T-cell (primary cell): ENCODE measurements at regions of chr9 and their contacts with region 1.

Region 1: DNA sequence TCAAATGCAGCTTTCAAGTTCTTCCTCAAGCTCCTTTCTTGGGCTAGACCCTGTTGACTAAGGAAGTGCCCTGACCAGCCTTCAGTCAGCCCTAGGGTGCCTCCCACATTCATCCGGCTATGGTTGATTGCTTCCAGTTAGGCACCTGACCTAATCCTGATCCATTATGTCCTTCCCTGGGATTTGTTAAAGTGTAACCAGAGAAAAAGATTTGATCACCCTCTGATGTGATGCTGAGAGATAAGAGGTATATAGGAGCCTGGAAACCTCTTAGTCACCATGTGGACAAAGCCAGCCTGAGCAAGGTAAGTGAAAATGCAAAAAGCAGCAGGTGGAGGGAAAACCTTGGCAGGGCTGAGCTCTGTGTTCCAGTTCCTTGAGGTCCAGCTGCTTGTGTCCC is 178.8 kb upstream of the ERCC6L2 start:
- DNase-seq: no peak
- ATAC-seq: no peak
- H3K4me3 ChIP-seq: no peak overlapping the region
- H3K4me3 Mint-ChIP-seq: no peak overlapping the region
- H3K27ac ChIP-seq: no peak overlapping the region
- H3K27ac Mint-ChIP-seq: no peak overlapping the region
- H3K4me1 ChIP-seq: no peaks in the 10 kb centered on the region
- H3K4me1 Mint-ChIP-seq: no peaks in the 10 kb centered on the region
- H3K27me3 ChIP-seq: peaks cover 0 to 5% of the 10 kb centered on the region in 2 experiments
- H3K27me3 Mint-ChIP-seq: peaks cover 2 to 5% of the 10 kb centered on the region in 2 donors

Region 2: DNA sequence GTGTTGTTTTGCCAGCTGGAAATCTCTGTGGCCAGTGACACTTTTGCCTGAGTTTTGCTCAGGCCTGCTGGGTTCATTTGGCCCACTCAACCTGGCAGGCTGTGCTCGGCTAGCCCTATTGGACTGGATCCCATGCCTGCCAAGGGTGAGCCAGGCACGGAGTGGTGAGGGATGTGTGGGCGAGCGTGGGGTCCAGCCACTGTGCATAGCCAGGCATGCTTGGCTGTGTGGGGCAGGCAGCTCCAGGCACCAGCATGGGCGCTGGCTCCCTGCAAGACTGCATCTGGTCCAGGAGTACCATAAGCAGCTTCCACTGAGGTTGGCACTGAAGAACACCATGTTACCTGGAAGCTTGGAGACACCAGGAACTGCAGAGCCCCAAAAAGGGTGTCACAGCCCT is 19.1 kb before region 1 on chr9:
- CTCF ChIA-PET with region 1: no interaction called
- POLR2A ChIA-PET with region 1: no interaction called
- DNase-seq: no peak
- ATAC-seq: no peak
- H3K4me3 ChIP-seq: no peak overlapping the region
- H3K4me3 Mint-ChIP-seq: no peak overlapping the region
- H3K27ac ChIP-seq: no peak overlapping the region
- H3K27ac Mint-ChIP-seq: no peak overlapping the region
- H3K4me1 ChIP-seq: peaks cover 2 to 9% of the 10 kb centered on the region in 2 experiments
- H3K4me1 Mint-ChIP-seq: peaks cover 12 to 19% (median 17%) of the 10 kb centered on the region in 3 donors
- H3K27me3 ChIP-seq: peaks cover 0 to 14% of the 10 kb centered on the region in 2 experiments
- H3K27me3 Mint-ChIP-seq: peaks cover 2 to 6% of the 10 kb centered on the region in 2 donors

Region 3: DNA sequence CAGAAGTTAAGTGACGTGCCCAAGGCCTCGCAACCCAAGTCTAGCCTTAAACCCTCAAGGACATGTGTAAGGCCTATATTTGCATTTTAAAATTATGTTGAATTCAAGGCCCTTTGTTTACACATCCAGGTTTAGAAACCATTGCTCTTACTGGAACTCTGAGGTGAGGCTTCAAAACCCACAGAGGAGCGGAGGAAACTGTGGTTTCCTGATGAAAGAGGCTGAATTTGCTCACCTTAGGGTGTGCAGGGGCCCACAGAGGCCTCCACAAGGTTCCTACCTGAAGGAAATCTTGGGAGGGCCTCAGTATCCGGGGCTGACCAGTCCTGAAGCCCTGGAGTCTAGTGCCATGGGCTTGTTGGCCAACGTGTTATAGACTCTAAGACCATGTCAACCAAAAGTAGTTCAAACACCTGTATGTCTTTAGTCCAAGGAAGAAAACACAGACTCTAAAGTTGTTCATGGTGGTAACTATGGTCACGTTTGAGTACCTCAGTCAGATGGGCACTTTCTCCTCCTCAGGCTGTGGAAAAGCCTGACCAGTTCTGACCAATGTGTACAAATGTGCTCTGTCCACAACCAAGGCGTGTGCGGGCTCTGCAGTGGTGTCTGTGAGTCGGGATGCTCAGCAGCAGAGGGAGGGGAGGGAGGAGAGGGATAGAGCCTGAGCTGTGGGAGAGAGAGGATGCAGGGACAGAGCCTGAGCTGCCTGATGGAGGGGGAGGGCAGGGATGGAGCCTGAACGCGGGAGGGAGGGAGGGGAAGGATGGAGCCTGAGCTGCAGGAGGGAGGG is 54.2 kb after region 1 on chr9:
- CTCF ChIA-PET with region 1: no interaction called
- POLR2A ChIA-PET with region 1: no interaction called
- DNase-seq: peak in 15 of 35 experiments; percentile 7 to 41 (median 23)
- ATAC-seq: peak; percentile 69 to 95 (median 88)
- H3K4me3 ChIP-seq: peak overlapping the region in 1 of 2 donors; percentile 30
- H3K4me3 Mint-ChIP-seq: peak overlapping the region; percentile 9 to 79 (median 28)
- H3K27ac ChIP-seq: no peak overlapping the region
- H3K27ac Mint-ChIP-seq: no peak overlapping the region
- H3K4me1 ChIP-seq: peaks cover 6 to 25% of the 10 kb centered on the region in 2 experiments
- H3K4me1 Mint-ChIP-seq: peaks cover 18 to 33% (median 19%) of the 10 kb centered on the region in 3 donors
- H3K27me3 ChIP-seq: peaks cover 0 to 26% of the 10 kb centered on the region in 2 experiments
- H3K27me3 Mint-ChIP-seq: peaks cover 7 to 10% of the 10 kb centered on the region in 2 donors

Region 4: GRCh38 chr9:96649620-96650323 is 953.1 kb after region 1 on chr9:
- CTCF ChIA-PET with region 1: no interaction called
- POLR2A ChIA-PET with region 1: interaction called in 1 of 2 experiments, 10 read pairs
- DNase-seq: no peak
- ATAC-seq: no peak
- H3K4me3 ChIP-seq: no peak overlapping the region
- H3K4me3 Mint-ChIP-seq: no peak overlapping the region
- H3K27ac ChIP-seq: no peak overlapping the region
- H3K27ac Mint-ChIP-seq: no peak overlapping the region
- H3K4me1 ChIP-seq: peaks cover 0 to 9% of the 10 kb centered on the region in 2 experiments
- H3K4me1 Mint-ChIP-seq: peaks cover 11 to 17% (median 15%) of the 10 kb centered on the region in 3 donors
- H3K27me3 ChIP-seq: no peaks in the 10 kb centered on the region
- H3K27me3 Mint-ChIP-seq: no peaks in the 10 kb centered on the region